RWPE1 (cell line): ENCODE measurements at regions of chr20 and their contacts with region 1.

Region 1: GRCh38 chr20:62590301-62591121 is 51.8 kb upstream of the SLCO4A1 start:
- DNase-seq: peak; percentile 99
- H3K27ac ChIP-seq: peak overlapping the region; percentile 79
- CTCF ChIP-seq: no peak

Region 2: DNA sequence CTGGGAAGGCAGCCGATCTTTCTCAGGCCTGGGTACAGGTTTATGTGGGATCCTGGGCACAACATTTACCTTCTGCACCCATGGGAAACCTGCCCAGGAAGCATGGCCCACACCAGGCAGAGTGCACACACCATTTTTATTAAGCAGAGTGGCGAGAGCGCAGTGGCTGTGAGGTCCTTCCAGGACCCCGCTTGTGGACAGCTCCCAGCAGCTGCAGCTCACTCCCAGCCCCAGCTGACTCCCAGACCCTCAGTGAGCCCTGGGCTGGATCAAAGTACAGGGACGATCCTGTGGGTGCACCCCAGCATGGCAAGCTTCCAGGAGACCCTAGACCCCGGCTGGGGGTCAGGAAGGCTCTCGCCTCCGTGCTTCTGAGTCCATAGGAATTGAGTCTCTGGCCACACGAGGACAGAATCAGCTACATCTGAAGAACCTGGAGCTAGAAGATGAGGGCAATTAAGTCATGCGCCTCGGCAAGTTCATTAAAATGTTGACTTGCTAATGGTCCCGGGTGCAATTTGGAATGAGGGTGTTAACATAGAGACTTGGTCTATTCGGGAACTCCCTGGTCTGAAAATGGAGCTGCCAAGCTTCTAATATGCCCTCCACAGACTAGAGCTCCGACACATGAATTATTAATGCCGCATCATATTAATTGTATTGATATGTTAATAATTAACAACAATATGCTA is 13.6 kb before region 1 on chr20:
- CTCF ChIA-PET with region 1: interaction called, 10 read pairs
- POLR2A ChIA-PET with region 1: no interaction called
- DNase-seq: no peak
- H3K27ac ChIP-seq: no peak overlapping the region
- CTCF ChIP-seq: no peak

Region 3: GRCh38 chr20:62937366-62938104 is 347.0 kb after region 1 on chr20:
- CTCF ChIA-PET with region 1: no interaction called
- POLR2A ChIA-PET with region 1: no interaction called
- DNase-seq: peak; percentile 99
- H3K27ac ChIP-seq: peak overlapping the region; percentile 90
- CTCF ChIP-seq: no peak